ENCODE measurements at regions of chr3 and their contacts with region 1.

Region 1: GRCh38 chr3:15859507-15860013 is 61.8 kb upstream of the ANKRD28 start:
- DNase-seq: peak; percentile 75 to 98 (median 88)

Region 2: GRCh38 chr3:15933439-15934139 is 74.0 kb after region 1 on chr3:
- intact Hi-C with region 1: loop called (anchors 5 kb)
- DNase-seq: peak in 4 of 10 donors; percentile 37 to 84 (median 48)